ENCODE measurements at regions of chr19 and their contacts with region 1.

Region 1: GRCh38 chr19:12064590-12065538 is at the start of gene ZNF844:
- DNase-seq: peak; percentile 99
- total RNA-seq, gene ZNF844: 7.8 to 14.9 TPM

Region 2: GRCh38 chr19:12133069-12133468 is 68.2 kb after region 1 on chr19:
- intact Hi-C with region 1: loop called in 1 of 2 experiments (anchors 5 kb)
- DNase-seq: no peak

Region 3: GRCh38 chr19:12139885-12140547 is 75.2 kb after region 1 on chr19 and contains the start of gene ZNF20:
- intact Hi-C with region 1: loop called in 1 of 2 experiments (anchors 5 kb)
- DNase-seq: peak; percentile 99
- total RNA-seq, gene ZNF20: 1.0 to 3.2 TPM

Region 4: DNA sequence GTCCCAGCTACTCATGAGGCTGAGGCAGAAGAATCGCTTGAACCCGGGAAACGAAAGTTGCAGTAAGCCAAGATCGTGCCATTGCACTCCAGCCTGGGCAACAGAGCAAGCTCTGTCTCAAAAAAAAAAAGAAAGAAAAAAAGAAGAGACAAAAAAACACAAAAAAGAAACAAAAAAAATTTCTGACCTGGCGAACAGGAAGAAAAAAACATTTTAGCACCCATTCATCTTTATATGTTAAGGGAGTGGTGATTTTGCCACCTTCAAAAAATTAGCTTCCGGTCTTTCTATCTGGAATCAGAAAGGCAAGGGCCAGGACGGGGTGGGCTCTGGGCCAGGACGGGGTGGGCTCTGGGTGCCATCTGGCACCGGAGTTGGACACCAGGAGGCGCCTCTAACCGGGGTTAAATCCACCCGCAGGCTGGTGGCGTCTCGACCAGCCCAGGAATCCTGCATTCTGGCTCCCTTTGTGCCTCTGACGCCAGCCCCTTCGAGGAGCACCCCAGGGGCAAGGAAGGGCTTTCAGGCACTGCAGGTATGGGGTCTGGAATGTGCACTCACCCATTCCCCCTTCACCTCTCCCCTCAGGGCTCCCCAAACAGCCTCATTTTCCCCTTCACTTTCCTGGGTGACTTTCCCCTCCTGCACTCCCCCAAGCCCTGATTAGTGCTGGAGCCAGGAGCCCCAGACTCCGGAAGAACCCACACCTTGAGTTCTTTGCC is 1720.0 kb after region 1 on chr19:
- intact Hi-C with region 1: loop called in 1 of 2 experiments (anchors 10 kb)
- DNase-seq: peak; percentile 91

Measured in posterior vena cava (tissue), 2 donors.